Dorsolateral prefrontal cortex (tissue), 120 donors: ENCODE measurements at regions of chr6 and their contacts with region 1.

Region 1: GRCh38 chr6:3848925-3849605 is at the start of gene FAM50B:
- DNase-seq: peak; percentile 89 to 93 (median 92)
- H3K4me3 ChIP-seq: peak within 1 kb of the TSS; percentile 37 to 80 (median 60)
- H3K27ac ChIP-seq: peak within 1 kb of the TSS in 58 of 59 donors; percentile 31 to 89 (median 76)
- H3K27me3 ChIP-seq: no peaks in the 10 kb centered on the region
- CTCF ChIP-seq: peak; percentile 46 to 99 (median 94)
- total RNA-seq, gene FAM50B: 15.2 to 33.0 (median 23.6) TPM

Region 2: GRCh38 chr6:3664625-3665041 is 184.4 kb before region 1 on chr6:
- intact Hi-C with region 1: no loop called
- DNase-seq: no peak
- H3K4me3 ChIP-seq: peak overlapping the region in 1 of 59 donors; percentile 17
- H3K27ac ChIP-seq: peak overlapping the region in 56 of 59 donors; percentile 44 to 97 (median 84)
- H3K27me3 ChIP-seq: no peaks in the 10 kb centered on the region
- CTCF ChIP-seq: no peak

Region 3: GRCh38 chr6:3721810-3722626 is 127.0 kb before region 1 on chr6:
- intact Hi-C with region 1: no loop called
- DNase-seq: no peak
- H3K4me3 ChIP-seq: no peak overlapping the region
- H3K27ac ChIP-seq: peak overlapping the region in 23 of 59 donors; percentile 11 to 76 (median 54)
- H3K27me3 ChIP-seq: no peaks in the 10 kb centered on the region
- CTCF ChIP-seq: no peak

Region 4: DNA sequence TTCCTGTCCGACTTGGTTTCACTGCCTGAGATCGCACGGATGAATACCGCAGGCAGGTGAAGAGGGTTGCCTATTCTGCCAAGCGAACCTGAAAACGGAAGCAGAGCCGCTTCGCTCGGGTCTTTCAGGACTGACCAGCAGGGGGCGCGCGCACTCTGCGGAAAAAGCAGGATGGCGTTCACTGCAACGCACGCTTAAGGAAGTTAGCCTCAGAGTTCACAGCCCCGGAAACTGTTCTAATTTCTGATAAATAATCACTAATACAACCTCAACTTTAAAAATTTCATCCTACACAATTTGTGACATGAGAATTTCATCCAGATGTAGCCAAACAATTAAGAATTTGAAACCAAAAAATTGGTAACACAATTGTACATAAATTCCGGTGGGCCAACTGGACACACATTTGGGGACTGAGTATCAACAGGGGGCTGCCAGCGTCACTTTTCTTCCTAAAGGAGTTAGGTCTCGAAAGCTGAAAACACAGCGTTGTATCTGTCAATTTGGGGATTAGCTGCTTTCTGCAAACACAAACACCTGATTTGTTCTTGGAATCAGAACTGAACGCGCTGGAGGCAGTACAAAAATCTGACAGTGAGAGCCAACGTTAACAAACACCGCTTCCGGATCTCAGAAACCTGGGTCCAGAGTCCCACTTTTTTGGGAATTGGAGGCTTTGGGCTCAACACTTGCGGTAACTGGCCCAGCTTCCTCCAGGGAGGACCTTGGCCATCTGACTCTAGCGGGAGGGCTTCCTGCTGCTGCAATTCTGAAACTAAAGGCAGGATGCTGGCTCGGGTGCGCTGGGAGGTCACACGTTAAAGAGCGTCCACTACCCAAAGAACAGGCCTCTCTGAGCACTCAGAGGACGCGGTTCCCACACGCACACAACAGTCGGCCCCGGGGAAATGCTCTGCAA is 106.4 kb before region 1 on chr6:
- intact Hi-C with region 1: loop called in 1 of 2 experiments (anchors 2 kb)
- DNase-seq: peak; percentile 73 to 92 (median 85)
- H3K4me3 ChIP-seq: peak overlapping the region in 55 of 59 donors; percentile 1 to 59 (median 31)
- H3K27ac ChIP-seq: peak overlapping the region in 56 of 59 donors; percentile 0 to 82 (median 62)
- H3K27me3 ChIP-seq: no peaks in the 10 kb centered on the region
- CTCF ChIP-seq: peak; percentile 93 to 100 (median 98)

Region 5: GRCh38 chr6:3751730-3752542 is 97.1 kb before region 1 on chr6:
- intact Hi-C with region 1: loop called in 1 of 2 experiments (anchors 2 kb)
- DNase-seq: peak in 8 of 10 donors; percentile 26 to 83 (median 66)
- H3K4me3 ChIP-seq: peak overlapping the region; percentile 47 to 80 (median 72)
- H3K27ac ChIP-seq: peak overlapping the region in 58 of 59 donors; percentile 22 to 98 (median 92)
- H3K27me3 ChIP-seq: no peaks in the 10 kb centered on the region
- CTCF ChIP-seq: peak in 39 of 56 donors; percentile 13 to 59 (median 28)

Region 6: GRCh38 chr6:3797231-3798054 is 51.6 kb before region 1 on chr6:
- intact Hi-C with region 1: loop called in 1 of 2 experiments (anchors 10 kb)
- DNase-seq: no peak
- H3K4me3 ChIP-seq: no peak overlapping the region
- H3K27ac ChIP-seq: peak overlapping the region in 32 of 59 donors; percentile 36 to 95 (median 86)
- H3K27me3 ChIP-seq: no peaks in the 10 kb centered on the region
- CTCF ChIP-seq: no peak

Region 7: DNA sequence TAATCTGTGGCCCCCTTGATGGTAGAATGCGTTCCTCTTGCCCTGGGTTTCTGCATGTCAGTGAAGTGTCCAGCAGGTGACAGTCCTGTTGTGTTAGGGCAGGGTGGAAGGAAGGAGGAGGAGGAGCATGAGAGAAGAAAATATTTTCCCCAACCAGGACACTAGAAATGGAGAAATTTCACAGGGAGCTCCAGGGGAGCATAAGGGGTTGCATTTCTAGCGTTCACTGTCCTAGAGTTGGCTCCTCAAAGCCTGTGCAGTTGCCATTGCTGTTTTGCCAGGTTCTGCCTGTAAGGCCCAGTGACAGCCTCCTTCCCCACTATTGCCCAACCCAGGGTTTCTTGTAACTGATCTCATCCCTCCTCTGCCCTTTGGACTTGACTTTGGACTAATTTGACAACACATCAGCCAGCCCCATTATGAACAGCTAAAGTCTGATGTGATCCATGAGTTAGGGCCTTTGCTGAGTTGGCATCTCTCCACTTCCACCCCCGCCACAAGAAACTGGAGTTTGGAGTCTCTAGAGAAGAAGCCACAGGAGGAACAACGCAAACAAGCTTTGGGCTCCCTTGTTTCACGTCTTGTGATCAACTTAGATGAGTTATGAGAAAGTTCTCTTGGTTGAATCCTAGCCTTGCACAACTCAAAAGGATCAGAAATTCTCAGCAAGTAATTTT is 13.9 kb before region 1 on chr6:
- intact Hi-C with region 1: no loop called
- DNase-seq: no peak
- H3K4me3 ChIP-seq: no peak overlapping the region
- H3K27ac ChIP-seq: no peak overlapping the region
- H3K27me3 ChIP-seq: no peaks in the 10 kb centered on the region
- CTCF ChIP-seq: no peak

Region 8: DNA sequence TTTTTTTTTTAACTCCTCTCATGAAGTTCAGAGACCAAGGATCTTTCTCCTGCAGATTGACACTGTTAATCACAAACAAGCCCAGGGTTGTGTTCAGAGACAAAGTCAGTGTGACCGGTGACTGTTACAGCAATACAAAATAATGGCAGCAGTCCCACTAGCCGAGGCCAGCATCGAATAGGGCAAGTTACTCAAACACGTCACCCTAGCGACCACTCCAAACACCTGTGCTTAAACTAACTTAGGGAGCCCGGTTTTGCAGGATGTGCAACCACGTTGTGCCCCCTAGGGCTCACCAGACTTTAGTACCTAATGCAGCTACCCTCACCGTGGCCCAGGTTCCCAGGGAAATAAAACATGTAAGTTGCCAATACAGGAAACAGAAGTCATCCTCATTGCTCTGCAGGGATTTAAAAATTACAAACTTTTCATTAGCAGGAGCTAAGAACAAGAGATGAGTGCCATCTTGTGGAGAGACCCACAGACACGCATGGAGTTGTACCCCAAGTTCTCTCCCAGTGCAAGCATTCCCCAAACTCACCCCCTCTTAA is 38.2 kb after region 1 on chr6:
- intact Hi-C with region 1: loop called in 1 of 2 experiments (anchors 2 kb)
- DNase-seq: no peak
- H3K4me3 ChIP-seq: no peak overlapping the region
- H3K27ac ChIP-seq: no peak overlapping the region
- H3K27me3 ChIP-seq: no peaks in the 10 kb centered on the region
- CTCF ChIP-seq: peak in 55 of 56 donors; percentile 35 to 77 (median 62)

Region 9: GRCh38 chr6:3970097-3970496 is 121.0 kb after region 1 on chr6:
- intact Hi-C with region 1: no loop called
- DNase-seq: no peak
- H3K4me3 ChIP-seq: no peak overlapping the region
- H3K27ac ChIP-seq: no peak overlapping the region
- H3K27me3 ChIP-seq: no peaks in the 10 kb centered on the region
- CTCF ChIP-seq: no peak

Region 10: DNA sequence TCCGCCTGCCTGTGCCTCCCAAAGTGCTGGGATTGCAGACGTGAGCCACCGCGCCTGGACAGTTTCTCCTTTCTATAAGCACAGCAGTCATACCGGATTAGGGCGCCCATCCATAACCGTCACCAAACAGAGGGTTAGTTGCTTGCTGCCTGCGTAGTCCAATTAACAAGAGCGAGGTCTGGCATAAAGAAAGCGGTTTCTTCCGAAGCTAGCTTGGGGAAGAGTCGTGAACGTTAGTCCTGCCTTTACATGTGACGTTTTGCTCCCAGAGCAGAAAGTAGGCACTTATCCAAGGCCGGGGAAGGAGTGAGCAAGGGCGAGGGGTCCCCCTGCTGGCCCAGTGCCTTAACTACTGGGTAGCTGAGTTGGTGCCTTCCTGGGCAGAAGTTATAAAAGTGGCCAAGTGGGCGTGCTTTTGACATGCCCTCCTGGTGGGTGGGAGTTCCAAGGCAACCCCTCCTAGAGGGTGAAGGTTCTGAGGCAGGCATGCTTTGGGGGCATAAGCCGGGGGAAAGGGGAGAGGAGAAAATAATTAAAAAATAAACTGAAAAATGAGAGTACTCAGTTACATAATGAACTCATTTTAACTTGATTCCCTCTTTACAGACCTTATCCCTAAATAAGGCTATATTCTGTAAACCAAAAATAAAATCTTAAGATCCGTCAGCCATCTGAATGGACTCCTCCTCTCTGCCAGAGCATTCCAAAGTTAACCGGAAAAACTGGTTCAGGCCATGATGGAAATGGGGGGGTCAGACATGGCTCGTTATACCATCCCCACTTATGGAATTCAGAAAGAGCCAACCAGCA is 141.8 kb after region 1 on chr6:
- intact Hi-C with region 1: loop called (anchors 5 kb)
- DNase-seq: peak; percentile 77 to 91 (median 87)
- H3K4me3 ChIP-seq: peak overlapping the region; percentile 36 to 72 (median 59)
- H3K27ac ChIP-seq: peak overlapping the region in 44 of 59 donors; percentile 9 to 83 (median 67)
- H3K27me3 ChIP-seq: no peaks in the 10 kb centered on the region
- CTCF ChIP-seq: peak; percentile 39 to 93 (median 84)